WTC11 (cell line): ENCODE measurements at regions of chr13 and their contacts with region 1.

Region 1: GRCh38 chr13:99176309-99177276 is 24.1 kb upstream of the UBAC2 start:
- DNase-seq: peak; percentile 89
- ATAC-seq: peak; percentile 95
- H3K4me3 Mint-ChIP-seq: no peak overlapping the region
- H3K27ac Mint-ChIP-seq: no peak overlapping the region
- H3K4me1 Mint-ChIP-seq: 0 out of 2 replicates have a peak, but pooled peaks cover 3% of the 10 kb centered on the region
- H3K27me3 Mint-ChIP-seq: peaks cover 55% of the 10 kb centered on the region
- CTCF ChIP-seq: peak; percentile 89

Region 2: GRCh38 chr13:99200432-99201167 is 24.0 kb after region 1 on chr13 and contains the start of gene UBAC2:
- CTCF ChIA-PET with region 1: interaction called, 18 read pairs
- POLR2A ChIA-PET with region 1: no interaction called
- DNase-seq: peak; percentile 95
- ATAC-seq: peak; percentile 83
- H3K4me3 Mint-ChIP-seq: peak within 1 kb of the TSS; percentile 92
- H3K27ac Mint-ChIP-seq: peak within 1 kb of the TSS; percentile 97
- H3K4me1 Mint-ChIP-seq: peaks cover 49% of the 10 kb centered on the region
- H3K27me3 Mint-ChIP-seq: no peaks in the 10 kb centered on the region
- CTCF ChIP-seq: no peak
- total RNA-seq, gene UBAC2: 64.7 to 72.4 TPM (median 71.3 TPM) in 3 replicates

Region 3: GRCh38 chr13:99264051-99264450 is 87.5 kb after region 1 on chr13:
- CTCF ChIA-PET with region 1: interaction called, 74 read pairs
- POLR2A ChIA-PET with region 1: interaction called, 3 read pairs
- DNase-seq: no peak
- ATAC-seq: no peak
- H3K4me3 Mint-ChIP-seq: no peak overlapping the region
- H3K27ac Mint-ChIP-seq: peak overlapping the region; percentile 73; the same call in 1 of the 2 replicates
- H3K4me1 Mint-ChIP-seq: peaks cover 12% of the 10 kb centered on the region
- H3K27me3 Mint-ChIP-seq: no peaks in the 10 kb centered on the region
- CTCF ChIP-seq: no peak

Region 4: GRCh38 chr13:99269627-99270241 is 93.1 kb after region 1 on chr13:
- CTCF ChIA-PET with region 1: interaction called, 74 read pairs
- POLR2A ChIA-PET with region 1: interaction called, 3 read pairs
- DNase-seq: no peak
- ATAC-seq: peak; percentile 50
- H3K4me3 Mint-ChIP-seq: no peak overlapping the region
- H3K27ac Mint-ChIP-seq: no peak overlapping the region
- H3K4me1 Mint-ChIP-seq: no peaks in the 10 kb centered on the region
- H3K27me3 Mint-ChIP-seq: no peaks in the 10 kb centered on the region
- CTCF ChIP-seq: no peak

Region 5: GRCh38 chr13:99386911-99387788 is 210.6 kb after region 1 on chr13:
- CTCF ChIA-PET with region 1: interaction called, 14 read pairs
- POLR2A ChIA-PET with region 1: no interaction called
- DNase-seq: peak; percentile 90
- ATAC-seq: peak; percentile 72
- H3K4me3 Mint-ChIP-seq: no peak overlapping the region
- H3K27ac Mint-ChIP-seq: no peak overlapping the region; the same call in 1 of the 2 replicates
- H3K4me1 Mint-ChIP-seq: peaks cover 20% of the 10 kb centered on the region
- H3K27me3 Mint-ChIP-seq: no peaks in the 10 kb centered on the region
- CTCF ChIP-seq: peak; percentile 87

Region 6: GRCh38 chr13:99436686-99437416 is 260.3 kb after region 1 on chr13:
- CTCF ChIA-PET with region 1: interaction called, 23 read pairs
- POLR2A ChIA-PET with region 1: interaction called, 3 read pairs
- DNase-seq: peak; percentile 88
- ATAC-seq: peak; percentile 52
- H3K4me3 Mint-ChIP-seq: no peak overlapping the region
- H3K27ac Mint-ChIP-seq: no peak overlapping the region
- H3K4me1 Mint-ChIP-seq: peaks cover 34% of the 10 kb centered on the region
- H3K27me3 Mint-ChIP-seq: no peaks in the 10 kb centered on the region
- CTCF ChIP-seq: peak; percentile 100